ENCODE measurements at regions of chr2 and their contacts with region 1.

Region 1: GRCh38 chr2:73085691-73086360 is 14.3 kb upstream of the SFXN5 start:
- DNase-seq: peak; percentile 63
- ATAC-seq: peak; percentile 69
- H3K4me3 ChIP-seq: no peak overlapping the region
- H3K27ac ChIP-seq: peak overlapping the region; percentile 26; the same call in 1 of the 2 replicates
- H3K4me1 ChIP-seq: peaks cover 31% of the 10 kb centered on the region
- H3K27me3 ChIP-seq: no peaks in the 10 kb centered on the region
- CTCF ChIP-seq: peak; percentile 95
- POLR2A ChIP-seq: 0 out of 2 replicates have a peak, but pooled peaks have one; percentile 35
- RAD21 ChIP-seq: peak; percentile 97

Region 2: DNA sequence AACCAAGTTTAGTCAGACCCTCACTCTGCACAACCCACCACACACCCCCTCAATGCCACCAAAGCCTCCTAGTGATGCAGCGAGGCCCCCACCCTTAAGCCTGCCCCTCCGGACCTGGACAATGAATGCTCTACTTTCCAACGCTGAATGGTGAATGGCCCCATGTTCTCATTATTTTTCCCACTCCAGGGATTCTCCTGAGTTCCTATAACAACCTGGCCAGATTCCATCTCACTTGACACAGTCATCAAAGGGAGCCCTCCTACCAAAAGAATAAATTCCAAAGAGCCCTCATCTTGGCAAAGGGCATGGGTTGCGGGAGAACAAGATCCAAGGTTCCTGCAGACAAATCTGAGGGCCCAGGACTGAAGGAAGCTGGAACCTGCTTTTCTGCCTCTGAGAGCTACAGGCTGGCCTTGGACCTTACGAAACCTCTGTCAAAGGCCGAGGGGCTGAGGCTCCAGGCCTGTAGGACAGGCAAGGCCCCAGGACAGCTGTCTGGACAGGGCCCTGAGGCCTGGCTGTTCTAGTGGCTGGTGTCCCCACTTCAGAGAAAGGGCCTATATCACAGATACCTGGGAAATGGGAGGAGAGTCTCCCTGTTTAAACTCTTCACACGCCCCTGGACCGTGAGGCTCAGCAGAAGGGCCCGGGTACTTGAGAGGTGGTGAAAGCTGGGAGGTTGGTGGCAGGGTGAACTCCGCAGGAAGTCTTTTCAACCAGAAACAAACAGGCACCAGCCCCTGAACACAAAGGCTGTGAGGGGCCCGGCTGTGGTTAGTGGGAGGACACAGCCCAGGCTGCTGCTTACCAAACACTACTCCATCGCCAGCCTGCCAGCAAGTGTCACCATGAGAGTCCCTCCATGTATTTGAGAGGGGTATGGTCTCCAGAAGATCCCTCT is 41.6 kb before region 1 on chr2:
- CTCF ChIA-PET with region 1: no interaction called
- POLR2A ChIA-PET with region 1: no interaction called
- dilution Hi-C with region 1: no loop called
- in situ Hi-C with region 1: no loop called
- intact Hi-C with region 1: no loop called
- DNase-seq: no peak
- ATAC-seq: no peak
- H3K4me3 ChIP-seq: no peak overlapping the region
- H3K27ac ChIP-seq: no peak overlapping the region
- H3K4me1 ChIP-seq: no peaks in the 10 kb centered on the region
- H3K27me3 ChIP-seq: no peaks in the 10 kb centered on the region
- CTCF ChIP-seq: no peak
- POLR2A ChIP-seq: no peak
- RAD21 ChIP-seq: no peak

Region 3: DNA sequence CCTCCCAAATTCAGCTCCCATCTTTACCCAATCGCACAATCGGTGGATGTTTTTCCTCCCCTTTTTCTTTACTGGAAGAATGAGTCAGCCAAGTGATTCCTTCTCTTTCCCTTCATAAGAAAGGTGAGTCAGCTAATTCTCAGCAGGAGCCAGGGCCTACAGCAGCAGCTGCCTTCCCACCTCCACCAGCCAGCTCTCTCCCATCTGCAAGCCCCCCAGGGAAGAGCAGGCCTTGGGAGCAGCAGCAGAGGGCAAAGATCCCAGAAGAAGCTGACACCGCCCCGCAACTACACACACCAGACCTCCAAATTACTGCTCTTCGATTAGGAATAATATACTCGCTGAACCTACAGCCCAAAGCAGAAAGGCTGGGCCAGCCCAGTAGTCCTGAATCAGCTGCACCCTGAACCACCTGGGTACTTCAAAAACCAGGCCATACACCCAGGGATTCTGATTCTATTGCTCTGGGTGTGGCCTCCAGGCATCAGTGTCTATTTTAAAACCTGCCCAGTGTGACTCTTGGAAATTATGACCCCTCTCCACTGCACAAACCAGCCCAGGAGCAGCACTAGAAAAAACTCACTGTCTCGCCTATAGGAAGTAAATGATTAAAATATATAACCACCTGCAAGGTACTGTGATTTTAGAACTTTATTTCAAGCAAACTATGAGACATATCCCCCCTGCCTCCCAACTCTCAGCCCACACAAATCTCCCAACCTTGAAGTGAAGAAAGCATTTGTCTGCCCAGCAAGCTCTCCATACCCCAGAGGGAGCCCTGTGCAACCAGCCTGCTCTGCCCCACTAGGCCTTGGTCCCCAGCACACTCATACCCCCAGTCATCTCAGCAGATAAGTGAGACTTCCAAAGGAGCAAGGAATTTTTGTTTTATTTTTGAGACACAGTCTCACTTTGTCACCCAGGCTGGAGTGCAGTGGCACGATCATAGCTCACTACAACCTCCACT is 21.6 kb before region 1 on chr2:
- CTCF ChIA-PET with region 1: no interaction called
- POLR2A ChIA-PET with region 1: no interaction called
- dilution Hi-C with region 1: no loop called
- in situ Hi-C with region 1: no loop called
- intact Hi-C with region 1: no loop called
- DNase-seq: peak; percentile 86
- ATAC-seq: peak; percentile 92
- H3K4me3 ChIP-seq: no peak overlapping the region
- H3K27ac ChIP-seq: peak overlapping the region; percentile 76
- H3K4me1 ChIP-seq: peaks cover 17% of the 10 kb centered on the region
- H3K27me3 ChIP-seq: no peaks in the 10 kb centered on the region
- CTCF ChIP-seq: no peak
- POLR2A ChIP-seq: no peak
- RAD21 ChIP-seq: no peak

Region 4: GRCh38 chr2:73111051-73112025 is 25.5 kb after region 1 on chr2:
- CTCF ChIA-PET with region 1: interaction called, 5 read pairs
- POLR2A ChIA-PET with region 1: no interaction called
- dilution Hi-C with region 1: no loop called
- in situ Hi-C with region 1: no loop called
- intact Hi-C with region 1: loop called (anchors 1 kb)
- DNase-seq: no peak
- ATAC-seq: 0 out of 2 replicates have a peak, but pooled peaks have one; percentile 2
- H3K4me3 ChIP-seq: peak overlapping the region; percentile 95
- H3K27ac ChIP-seq: peak overlapping the region; percentile 90
- H3K4me1 ChIP-seq: peaks cover 31% of the 10 kb centered on the region
- H3K27me3 ChIP-seq: no peaks in the 10 kb centered on the region
- CTCF ChIP-seq: no peak
- POLR2A ChIP-seq: no peak
- RAD21 ChIP-seq: no peak

Region 5: DNA sequence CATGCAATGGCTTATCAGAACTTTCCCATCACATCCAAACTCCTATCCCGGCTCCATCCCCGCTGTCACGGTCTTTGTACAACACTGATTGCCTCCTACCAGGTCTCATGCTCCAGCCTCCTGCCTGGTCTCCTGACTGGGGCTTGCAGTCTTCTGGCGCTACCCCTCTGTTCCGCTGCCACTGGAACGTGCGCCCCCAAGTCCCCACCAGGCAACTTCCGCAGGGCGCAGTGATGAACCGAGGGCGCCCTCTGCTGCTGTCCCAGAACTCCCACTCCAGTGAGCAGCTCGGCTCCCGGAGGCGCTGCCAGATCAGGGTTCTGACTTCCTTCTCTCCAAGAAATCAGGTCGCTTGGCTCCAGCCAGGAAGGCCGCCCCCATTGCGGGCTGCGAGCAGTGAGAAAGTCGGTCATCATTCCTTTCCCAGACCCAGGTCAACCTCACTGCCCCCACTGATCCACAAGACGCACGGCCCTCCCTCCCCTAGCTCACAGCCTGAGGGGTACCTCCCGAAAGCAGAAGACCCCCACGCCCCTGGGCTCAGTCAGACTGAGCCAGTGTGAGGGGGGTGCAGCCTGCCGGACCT is 70.8 kb after region 1 on chr2:
- CTCF ChIA-PET with region 1: interaction called, 31 read pairs
- POLR2A ChIA-PET with region 1: no interaction called
- dilution Hi-C with region 1: no loop called
- in situ Hi-C with region 1: loop called (anchors 5 kb)
- intact Hi-C with region 1: loop called (anchors 1 kb)
- DNase-seq: peak; percentile 62
- ATAC-seq: peak; percentile 99
- H3K4me3 ChIP-seq: no peak overlapping the region
- H3K27ac ChIP-seq: no peak overlapping the region
- H3K4me1 ChIP-seq: no peaks in the 10 kb centered on the region
- H3K27me3 ChIP-seq: peaks cover 21% of the 10 kb centered on the region
- CTCF ChIP-seq: peak; percentile 91
- POLR2A ChIP-seq: no peak
- RAD21 ChIP-seq: peak; percentile 96

Region 6: GRCh38 chr2:73163483-73164367 is 77.9 kb after region 1 on chr2:
- CTCF ChIA-PET with region 1: interaction called, 4 read pairs
- POLR2A ChIA-PET with region 1: no interaction called
- dilution Hi-C with region 1: no loop called
- in situ Hi-C with region 1: loop called (anchors 5 kb)
- intact Hi-C with region 1: loop called (anchors 1 kb)
- DNase-seq: peak; percentile 74
- ATAC-seq: peak; percentile 98
- H3K4me3 ChIP-seq: no peak overlapping the region
- H3K27ac ChIP-seq: no peak overlapping the region
- H3K4me1 ChIP-seq: no peaks in the 10 kb centered on the region
- H3K27me3 ChIP-seq: peaks cover 21% of the 10 kb centered on the region
- CTCF ChIP-seq: peak; percentile 94
- POLR2A ChIP-seq: 0 out of 2 replicates have a peak, but pooled peaks have one; percentile 25
- RAD21 ChIP-seq: peak; percentile 95

Region 7: GRCh38 chr2:73212448-73213176 is 126.8 kb after region 1 on chr2:
- CTCF ChIA-PET with region 1: no interaction called
- POLR2A ChIA-PET with region 1: no interaction called
- dilution Hi-C with region 1: no loop called
- in situ Hi-C with region 1: no loop called
- intact Hi-C with region 1: loop called (anchors 2 kb)
- DNase-seq: peak; percentile 87
- ATAC-seq: peak; percentile 70
- H3K4me3 ChIP-seq: no peak overlapping the region
- H3K27ac ChIP-seq: no peak overlapping the region
- H3K4me1 ChIP-seq: peaks cover 6% of the 10 kb centered on the region; the same call in 1 of the 2 replicates
- H3K27me3 ChIP-seq: peaks cover 10% of the 10 kb centered on the region
- CTCF ChIP-seq: peak; percentile 83
- POLR2A ChIP-seq: no peak
- RAD21 ChIP-seq: peak; percentile 61

Region 8: DNA sequence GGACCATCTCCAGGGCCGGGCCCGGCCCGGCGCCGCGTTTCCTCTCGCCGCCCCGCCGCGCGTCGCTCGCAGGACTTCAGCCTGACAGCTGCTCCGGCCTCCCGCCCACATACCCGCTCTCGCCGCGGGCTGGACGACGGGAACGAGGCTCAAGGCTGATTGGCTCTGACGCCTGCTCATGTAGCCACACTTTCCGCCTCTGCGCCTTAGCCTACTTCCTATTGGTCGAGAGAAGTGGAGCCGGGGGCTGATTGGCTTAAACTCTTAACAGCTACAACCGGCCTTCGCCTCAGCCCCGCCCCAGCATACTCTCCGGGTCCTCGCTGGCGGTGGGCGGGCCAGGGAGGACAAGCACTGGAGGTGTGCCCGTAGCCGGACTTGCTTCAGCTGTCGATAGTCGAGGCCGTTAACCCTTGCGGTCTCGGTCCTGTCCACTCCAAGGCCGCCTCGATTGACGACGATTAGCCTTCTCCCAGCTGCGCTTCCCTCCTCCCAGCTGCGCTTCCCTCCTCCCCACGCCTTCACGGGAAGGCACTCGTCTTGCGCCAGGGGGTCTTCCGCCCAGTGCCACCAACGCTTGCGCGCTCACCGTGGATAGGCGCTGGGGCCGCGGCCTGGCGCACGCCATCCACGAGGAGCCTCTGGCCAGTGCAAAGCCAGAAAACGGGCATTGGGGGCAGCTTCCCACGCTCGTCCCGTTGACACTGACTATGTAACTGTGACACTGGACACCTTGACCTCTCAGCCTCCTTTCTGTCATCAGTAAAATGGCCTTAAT is 147.5 kb after region 1 on chr2 and contains the start of gene PRADC1:
- CTCF ChIA-PET with region 1: no interaction called
- POLR2A ChIA-PET with region 1: no interaction called
- dilution Hi-C with region 1: no loop called
- in situ Hi-C with region 1: no loop called
- intact Hi-C with region 1: no loop called
- DNase-seq: peak; percentile 100
- ATAC-seq: peak; percentile 93
- H3K4me3 ChIP-seq: peak within 1 kb of the TSS; percentile 83
- H3K27ac ChIP-seq: peak within 1 kb of the TSS; percentile 71
- H3K4me1 ChIP-seq: peaks cover 5% of the 10 kb centered on the region; the same call in 1 of the 2 replicates
- H3K27me3 ChIP-seq: no peaks in the 10 kb centered on the region
- CTCF ChIP-seq: no peak
- POLR2A ChIP-seq: peak; percentile 46; the same call in 1 of the 2 replicates
- RAD21 ChIP-seq: no peak
- total RNA-seq, gene PRADC1: 13.1 and 14.4 TPM in 2 replicates

Region 9: DNA sequence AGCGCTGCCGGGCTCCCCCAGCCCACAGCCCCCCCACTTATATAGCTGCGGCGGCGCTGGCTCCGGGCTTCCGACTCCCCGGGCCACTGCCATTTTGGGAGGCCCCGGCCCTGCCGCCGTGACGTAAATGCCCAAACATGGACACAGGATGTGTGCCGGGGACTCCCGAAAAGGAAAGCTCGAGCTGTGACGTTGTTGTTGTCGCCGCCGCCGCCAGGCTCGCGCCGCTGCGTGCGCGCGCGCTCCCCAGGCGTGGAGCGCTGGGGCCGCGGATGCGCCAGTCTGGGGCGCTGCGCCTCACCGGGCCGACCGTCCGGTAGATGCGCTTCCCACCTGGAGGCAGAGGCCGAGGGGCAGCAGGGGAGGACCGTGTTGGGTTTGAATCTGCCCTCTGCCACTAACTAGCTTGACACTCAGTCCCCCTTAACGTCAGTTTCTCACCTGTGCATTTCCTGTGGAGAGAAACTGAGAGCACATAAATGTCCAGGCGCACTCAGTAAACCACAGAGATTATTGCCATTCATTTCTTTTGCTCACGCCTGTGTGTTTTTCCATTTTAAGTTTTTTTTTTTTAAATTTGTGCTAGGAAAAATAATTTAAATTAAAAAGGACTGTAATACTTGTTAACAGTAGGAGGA is 207.8 kb after region 1 on chr2 and contains the start of gene EGR4:
- CTCF ChIA-PET with region 1: no interaction called
- POLR2A ChIA-PET with region 1: no interaction called
- dilution Hi-C with region 1: no loop called
- in situ Hi-C with region 1: no loop called
- intact Hi-C with region 1: no loop called
- DNase-seq: peak; percentile 74
- ATAC-seq: peak; percentile 85
- H3K4me3 ChIP-seq: peak within 1 kb of the TSS; percentile 65
- H3K27ac ChIP-seq: no peak within 1 kb of the TSS
- H3K4me1 ChIP-seq: no peaks in the 10 kb centered on the region; the same call in 1 of the 2 replicates
- H3K27me3 ChIP-seq: peaks cover 65% of the 10 kb centered on the region
- CTCF ChIP-seq: no peak
- POLR2A ChIP-seq: no peak
- RAD21 ChIP-seq: no peak
- total RNA-seq, gene EGR4: not detected in 2 replicates

Measured in IMR-90 (cell line).